Activated CD4-positive, alpha-beta memory T cell treated with anti-CD3 and anti-CD28 coated beads, Interleukin-2, amount 10 ng/mL, durations not matched to agents 7 days and 5 days (primary cell): ENCODE measurements at regions of chr16 and their contacts with region 1.

Region 1: GRCh38 chr16:28984619-28985135 is at the start of gene LAT:
- DNase-seq: peak; percentile 89
- H3K4me3 Mint-ChIP-seq: peak within 1 kb of the TSS; percentile 99
- H3K27ac Mint-ChIP-seq: peak within 1 kb of the TSS; percentile 92
- H3K4me1 Mint-ChIP-seq: peaks cover 44% of the 10 kb centered on the region
- H3K27me3 Mint-ChIP-seq: no peaks in the 10 kb centered on the region
- total RNA-seq, gene LAT: 333 to 341 TPM

Region 2: DNA sequence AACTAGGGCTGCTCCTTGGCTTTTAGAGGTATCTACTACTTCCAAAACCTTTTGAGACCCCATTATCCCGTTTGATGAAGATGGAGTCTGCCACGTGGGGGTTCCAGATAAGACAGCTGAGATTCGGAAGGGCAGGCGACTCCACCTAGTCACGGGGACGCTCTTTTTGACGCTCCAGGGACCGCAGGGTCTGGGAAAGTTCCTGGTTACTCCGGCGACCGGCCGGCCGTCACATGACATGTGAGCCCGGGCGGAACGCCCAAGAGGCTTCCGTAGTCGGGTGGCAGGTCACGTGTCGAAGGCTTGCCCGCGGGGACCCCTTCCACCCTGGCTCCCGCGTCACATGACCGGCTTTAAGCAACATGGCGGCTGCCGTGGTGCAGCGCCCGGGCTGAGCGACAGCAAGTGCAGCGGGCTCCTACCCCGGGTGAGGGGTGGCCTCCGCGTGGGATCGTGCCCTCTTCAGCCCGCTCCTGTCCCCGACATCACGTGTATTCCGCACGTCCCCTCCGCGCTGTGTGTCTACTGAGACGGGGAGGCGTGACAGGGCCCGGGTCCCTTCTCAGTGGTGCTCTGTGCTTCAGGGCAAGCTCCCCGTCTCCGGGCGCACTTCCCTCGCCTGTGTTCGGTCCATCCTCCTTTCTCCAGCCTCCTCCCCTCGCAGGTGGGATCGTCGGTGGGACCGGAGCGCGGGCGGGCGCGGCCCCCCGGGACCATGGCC is 10.1 kb before region 1 on chr16 and contains the start of gene SPNS1:
- CTCF ChIA-PET with region 1: interaction called, 15 read pairs
- POLR2A ChIA-PET with region 1: interaction called, 83 read pairs
- DNase-seq: peak; percentile 95
- H3K4me3 Mint-ChIP-seq: peak within 1 kb of the TSS; percentile 80
- H3K27ac Mint-ChIP-seq: peak within 1 kb of the TSS; percentile 78
- H3K4me1 Mint-ChIP-seq: peaks cover 40% of the 10 kb centered on the region
- H3K27me3 Mint-ChIP-seq: no peaks in the 10 kb centered on the region
- total RNA-seq, gene SPNS1: 20.6 to 24.7 TPM

Region 3: DNA sequence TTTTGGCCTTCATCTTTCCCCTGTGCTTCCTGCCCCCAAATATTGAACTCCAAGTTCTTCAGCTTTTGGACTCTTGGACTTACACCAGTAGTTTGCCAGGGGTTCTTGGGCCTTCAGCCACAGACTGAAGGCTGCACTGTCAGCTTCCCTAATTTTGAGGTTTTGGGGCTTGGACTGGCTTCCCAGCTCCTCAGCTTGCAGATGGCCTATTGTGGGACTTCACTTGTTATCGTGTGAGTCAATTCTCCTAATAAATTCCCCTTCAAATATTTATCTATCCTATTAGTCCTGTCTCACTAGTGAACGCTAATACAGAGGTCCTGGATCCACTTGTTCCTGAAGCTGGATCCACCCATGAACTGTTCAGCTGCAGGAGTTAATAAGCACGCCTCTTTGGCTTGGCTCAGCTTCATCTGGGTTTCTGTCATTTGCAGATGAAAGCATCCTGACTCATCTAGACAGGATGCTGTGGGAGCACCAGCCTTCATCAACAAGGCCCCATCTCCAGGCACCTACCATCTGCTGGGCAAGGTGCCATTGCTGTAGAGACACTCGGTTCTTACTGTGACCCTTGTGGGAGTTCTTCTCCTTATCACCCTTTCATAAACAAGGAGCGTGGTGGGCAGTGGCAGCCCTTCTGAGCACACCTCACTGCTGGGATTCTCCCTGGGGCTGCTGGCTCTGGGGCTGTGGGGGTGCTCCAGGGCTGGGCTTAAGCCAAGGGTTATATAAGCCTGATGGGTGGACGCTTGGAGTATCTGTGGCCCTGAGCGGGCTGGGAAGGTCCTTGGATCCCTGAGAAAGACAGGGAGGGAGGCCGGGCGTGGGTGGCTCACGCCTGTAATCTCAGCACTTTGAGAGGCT is 23.3 kb after region 1 on chr16:
- CTCF ChIA-PET with region 1: interaction called, 4 read pairs
- POLR2A ChIA-PET with region 1: interaction called, 44 read pairs
- DNase-seq: peak; percentile 80
- H3K4me3 Mint-ChIP-seq: no peak overlapping the region
- H3K27ac Mint-ChIP-seq: peak overlapping the region; percentile 88
- H3K4me1 Mint-ChIP-seq: peaks cover 51% of the 10 kb centered on the region
- H3K27me3 Mint-ChIP-seq: no peaks in the 10 kb centered on the region

Region 4: GRCh38 chr16:29022196-29022595 is 37.5 kb after region 1 on chr16:
- CTCF ChIA-PET with region 1: interaction called, 5 read pairs
- POLR2A ChIA-PET with region 1: interaction called, 18 read pairs
- DNase-seq: no peak
- H3K4me3 Mint-ChIP-seq: no peak overlapping the region
- H3K27ac Mint-ChIP-seq: no peak overlapping the region
- H3K4me1 Mint-ChIP-seq: peaks cover 33% of the 10 kb centered on the region
- H3K27me3 Mint-ChIP-seq: no peaks in the 10 kb centered on the region

Region 5: DNA sequence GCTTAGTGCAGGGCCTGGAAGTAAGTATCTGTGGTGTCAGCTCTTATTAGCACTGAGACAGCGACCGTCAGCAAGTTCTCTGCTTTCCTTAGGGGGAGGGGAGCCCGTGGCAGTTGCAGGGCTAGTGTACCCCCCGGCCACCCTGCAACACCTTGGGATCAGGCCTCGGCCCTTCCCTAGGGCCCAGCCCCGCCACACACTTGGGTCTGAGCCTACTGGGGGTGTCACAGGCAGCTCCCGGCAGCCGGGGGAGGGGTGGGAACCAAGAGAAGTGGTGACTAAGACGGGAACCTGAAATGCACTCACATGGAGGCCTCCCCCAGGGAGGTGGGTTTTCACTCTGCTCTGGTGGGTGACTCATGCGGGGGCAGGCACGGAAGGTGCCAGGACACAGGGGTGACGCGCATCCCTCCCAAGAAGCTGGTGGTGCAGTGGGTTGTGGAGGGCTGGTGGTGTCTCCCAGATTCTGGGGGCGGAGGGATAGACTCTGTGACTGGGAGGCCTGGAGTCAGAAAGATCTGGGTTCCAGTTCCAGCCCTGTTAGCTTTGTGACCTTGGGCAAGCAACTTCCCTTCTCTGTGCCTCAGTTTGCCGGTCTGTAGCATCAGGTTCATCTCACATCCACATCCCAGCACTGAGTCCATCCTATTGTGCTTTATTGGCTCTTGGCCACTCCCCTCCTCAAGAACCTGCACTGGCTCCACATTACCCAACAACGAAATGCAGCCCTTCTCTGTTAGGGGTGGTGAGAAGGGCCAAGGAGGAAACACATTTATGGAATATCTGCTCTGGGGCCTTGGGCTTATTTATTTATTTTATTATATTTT is 44.7 kb after region 1 on chr16:
- CTCF ChIA-PET with region 1: no interaction called
- POLR2A ChIA-PET with region 1: interaction called, 13 read pairs
- DNase-seq: peak; percentile 74
- H3K4me3 Mint-ChIP-seq: no peak overlapping the region
- H3K27ac Mint-ChIP-seq: peak overlapping the region; percentile 21
- H3K4me1 Mint-ChIP-seq: peaks cover 27% of the 10 kb centered on the region
- H3K27me3 Mint-ChIP-seq: no peaks in the 10 kb centered on the region